ENCODE measurements at regions of chr6 and their contacts with region 1.

Region 1: DNA sequence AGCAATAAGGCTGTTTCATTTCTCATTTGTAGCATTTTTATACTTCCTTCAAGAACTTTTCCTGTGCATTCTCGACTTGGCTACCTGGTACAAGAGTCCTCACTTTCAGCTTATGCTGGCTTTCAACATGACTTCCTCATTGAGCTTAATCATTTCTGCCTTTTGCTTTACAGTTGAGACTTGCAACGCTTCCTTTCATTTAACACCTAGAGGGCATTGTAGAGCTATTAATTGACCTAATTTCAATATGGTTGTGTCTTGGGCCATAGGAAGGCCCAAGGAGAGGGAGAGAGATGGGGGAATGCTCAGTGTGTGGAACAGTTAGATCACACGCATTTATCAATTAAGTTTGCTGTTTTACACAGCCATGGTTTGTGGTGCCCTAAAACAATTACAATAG is 37.2 kb downstream of the SLC22A2 start:
- DNase-seq: no peak
- H3K4me3 ChIP-seq: no peak overlapping the region
- H3K27ac ChIP-seq: no peak overlapping the region
- H3K4me1 ChIP-seq: no peaks in the 10 kb centered on the region
- H3K27me3 ChIP-seq: peaks cover 4% of the 10 kb centered on the region; the same call in 1 of the 2 replicates
- CTCF ChIP-seq: peak; percentile 35; the same call in 1 of the 2 replicates

Region 2: GRCh38 chr6:159616456-159616855 is 605.0 kb before region 1 on chr6:
- CTCF ChIA-PET with region 1: interaction called, 13 read pairs
- POLR2A ChIA-PET with region 1: no interaction called
- intact Hi-C with region 1: no loop called
- DNase-seq: no peak
- H3K4me3 ChIP-seq: no peak overlapping the region
- H3K27ac ChIP-seq: no peak overlapping the region
- H3K4me1 ChIP-seq: no peaks in the 10 kb centered on the region
- H3K27me3 ChIP-seq: peaks cover 45% of the 10 kb centered on the region
- CTCF ChIP-seq: no peak

Measured in PC-9 (cell line).